A673 (cell line): ENCODE measurements at regions of chr9 and their contacts with region 1.

Region 1: GRCh38 chr9:113463418-113464285 is at the start of gene RGS3:
- DNase-seq: peak; percentile 60
- H3K4me3 ChIP-seq: peak within 1 kb of the TSS; percentile 58
- H3K27ac ChIP-seq: peak within 1 kb of the TSS; percentile 54
- H3K4me1 ChIP-seq: no peaks in the 10 kb centered on the region
- H3K27me3 ChIP-seq: no peaks in the 10 kb centered on the region
- CTCF ChIP-seq: no peak
- total RNA-seq, gene RGS3: 19.2 and 19.8 TPM in 2 replicates

Region 2: DNA sequence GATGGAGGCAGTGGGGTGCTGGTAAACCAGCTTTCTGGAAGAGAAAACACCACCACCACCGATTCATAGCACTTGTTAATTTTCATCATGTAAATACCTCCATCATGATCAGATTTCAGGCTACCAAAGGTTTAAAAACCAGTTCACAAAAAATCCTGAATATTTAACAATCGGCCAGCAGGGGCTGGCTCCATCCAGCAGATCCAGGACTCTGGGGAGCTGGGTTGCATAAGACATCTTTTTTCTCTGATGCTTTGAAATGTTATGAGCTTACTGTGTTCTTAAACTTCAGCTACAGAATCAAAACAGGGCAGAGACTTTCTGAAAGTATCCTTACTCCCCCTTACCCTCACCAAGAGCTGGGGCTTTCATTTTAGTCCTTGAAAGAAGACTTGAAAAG is 145.9 kb before region 1 on chr9:
- CTCF ChIA-PET with region 1: no interaction called
- POLR2A ChIA-PET with region 1: no interaction called
- intact Hi-C with region 1: no loop called
- DNase-seq: peak; percentile 23
- H3K4me3 ChIP-seq: no peak overlapping the region
- H3K27ac ChIP-seq: no peak overlapping the region
- H3K4me1 ChIP-seq: no peaks in the 10 kb centered on the region
- H3K27me3 ChIP-seq: no peaks in the 10 kb centered on the region
- CTCF ChIP-seq: 0 out of 2 replicates have a peak, but pooled peaks have one; percentile 22

Region 3: DNA sequence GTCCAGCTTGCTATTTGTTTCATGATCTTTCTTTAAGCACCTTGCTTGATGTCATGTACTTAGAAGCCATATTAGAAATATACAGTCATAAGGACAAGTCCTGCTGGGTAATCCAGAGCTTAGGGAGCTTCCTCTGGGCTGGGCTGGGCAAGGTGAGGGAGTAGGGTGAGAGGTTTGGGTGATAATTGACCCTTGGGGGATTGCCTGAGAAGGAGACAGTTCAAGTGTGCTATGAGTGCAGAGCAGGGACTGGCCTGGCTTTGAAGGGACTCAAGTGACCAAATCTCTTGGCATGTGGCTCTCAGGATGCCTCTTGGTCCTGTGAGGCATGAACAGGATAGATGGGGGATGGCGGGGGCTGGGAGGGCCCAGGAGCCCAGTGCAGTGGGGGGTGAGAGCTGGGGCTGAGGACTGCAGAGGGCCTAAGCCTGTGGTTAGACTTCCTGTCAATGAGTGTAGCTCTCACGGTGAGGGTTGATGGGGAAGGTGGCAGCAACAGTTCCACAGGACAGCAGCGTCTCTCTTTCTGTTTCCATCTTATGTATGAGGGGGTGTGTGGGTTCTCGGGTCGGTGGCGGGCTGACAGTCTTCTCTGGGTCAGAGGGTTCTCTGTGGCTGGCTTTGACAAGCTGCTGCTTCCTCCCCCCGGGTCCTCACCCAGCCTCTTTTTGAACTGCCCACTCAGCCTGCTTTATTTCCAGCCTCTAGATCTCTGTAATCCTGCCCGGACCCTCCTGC is 53.4 kb after region 1 on chr9:
- CTCF ChIA-PET with region 1: no interaction called
- POLR2A ChIA-PET with region 1: no interaction called
- intact Hi-C with region 1: no loop called
- DNase-seq: no peak
- H3K4me3 ChIP-seq: no peak overlapping the region
- H3K27ac ChIP-seq: no peak overlapping the region
- H3K4me1 ChIP-seq: no peaks in the 10 kb centered on the region
- H3K27me3 ChIP-seq: no peaks in the 10 kb centered on the region
- CTCF ChIP-seq: no peak

Region 4: DNA sequence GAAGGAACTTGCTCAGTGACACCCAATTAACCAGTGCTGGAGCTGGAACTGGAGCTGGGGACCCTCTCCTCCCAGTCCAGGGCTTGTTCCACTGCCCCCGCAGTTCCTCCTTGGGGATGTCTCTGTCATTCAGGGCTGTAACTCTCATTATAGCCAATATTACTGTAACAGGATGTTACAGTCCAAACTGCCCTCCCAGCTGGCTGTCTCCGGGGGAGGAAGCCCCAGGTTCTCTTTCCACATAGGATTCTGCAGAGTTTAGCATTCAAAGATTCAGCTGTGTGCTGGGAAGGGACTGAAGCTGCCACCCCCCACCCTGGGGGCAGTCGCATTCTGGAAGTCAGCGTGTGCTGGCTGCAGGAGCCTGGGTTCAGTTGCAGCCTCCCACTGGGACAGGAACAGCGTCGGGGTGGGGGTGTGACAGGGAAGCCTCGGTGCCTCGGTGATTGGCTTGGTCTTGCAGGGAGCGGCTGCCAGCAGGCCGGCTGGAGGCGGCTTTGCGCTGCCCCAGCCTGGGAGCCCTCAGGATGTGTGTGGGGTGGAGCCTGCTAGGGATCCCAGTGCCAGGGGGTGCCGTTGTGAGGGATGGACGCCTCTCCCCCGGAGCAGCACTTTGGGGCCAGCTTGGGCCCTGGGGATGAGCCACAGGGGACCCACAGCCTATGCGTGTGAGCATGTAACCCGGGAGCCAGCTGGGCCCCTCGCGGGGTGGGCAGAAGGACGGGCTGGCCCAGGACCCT is 101.0 kb after region 1 on chr9:
- CTCF ChIA-PET with region 1: no interaction called
- POLR2A ChIA-PET with region 1: no interaction called
- intact Hi-C with region 1: loop called (anchors 10 kb)
- DNase-seq: peak; percentile 62
- H3K4me3 ChIP-seq: peak overlapping the region; percentile 33
- H3K27ac ChIP-seq: no peak overlapping the region
- H3K4me1 ChIP-seq: peaks cover 21% of the 10 kb centered on the region
- H3K27me3 ChIP-seq: no peaks in the 10 kb centered on the region
- CTCF ChIP-seq: no peak

Region 5: GRCh38 chr9:113624721-113625120 is 161.1 kb after region 1 on chr9:
- CTCF ChIA-PET with region 1: no interaction called
- POLR2A ChIA-PET with region 1: no interaction called
- intact Hi-C with region 1: no loop called
- DNase-seq: no peak
- H3K4me3 ChIP-seq: no peak overlapping the region
- H3K27ac ChIP-seq: no peak overlapping the region
- H3K4me1 ChIP-seq: peaks cover 30% of the 10 kb centered on the region
- H3K27me3 ChIP-seq: no peaks in the 10 kb centered on the region
- CTCF ChIP-seq: no peak

Region 6: DNA sequence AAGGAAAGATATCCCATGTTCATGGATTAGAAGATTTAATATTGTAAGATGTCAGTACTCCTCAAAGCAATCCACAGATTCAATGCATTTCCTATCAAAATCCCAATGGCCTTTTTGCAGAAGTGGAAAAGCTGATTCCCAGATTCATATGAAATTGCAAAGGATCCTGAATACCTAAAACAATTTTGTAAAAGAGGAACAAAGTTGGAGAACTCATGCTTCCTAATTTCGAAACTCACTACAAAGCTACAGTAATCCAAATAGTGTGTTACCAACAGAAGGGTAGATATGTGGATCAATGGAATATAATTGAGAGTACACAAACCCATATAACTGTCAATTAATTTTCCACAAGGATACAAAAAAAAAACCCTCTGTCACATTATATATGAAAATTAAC is 258.2 kb after region 1 on chr9:
- CTCF ChIA-PET with region 1: no interaction called
- POLR2A ChIA-PET with region 1: no interaction called
- intact Hi-C with region 1: no loop called
- DNase-seq: no peak
- H3K4me3 ChIP-seq: no peak overlapping the region
- H3K27ac ChIP-seq: no peak overlapping the region
- H3K4me1 ChIP-seq: peaks cover 8% of the 10 kb centered on the region
- H3K27me3 ChIP-seq: no peaks in the 10 kb centered on the region
- CTCF ChIP-seq: no peak